ENCODE measurements at regions of chr12 and their contacts with region 1.

Region 1: DNA sequence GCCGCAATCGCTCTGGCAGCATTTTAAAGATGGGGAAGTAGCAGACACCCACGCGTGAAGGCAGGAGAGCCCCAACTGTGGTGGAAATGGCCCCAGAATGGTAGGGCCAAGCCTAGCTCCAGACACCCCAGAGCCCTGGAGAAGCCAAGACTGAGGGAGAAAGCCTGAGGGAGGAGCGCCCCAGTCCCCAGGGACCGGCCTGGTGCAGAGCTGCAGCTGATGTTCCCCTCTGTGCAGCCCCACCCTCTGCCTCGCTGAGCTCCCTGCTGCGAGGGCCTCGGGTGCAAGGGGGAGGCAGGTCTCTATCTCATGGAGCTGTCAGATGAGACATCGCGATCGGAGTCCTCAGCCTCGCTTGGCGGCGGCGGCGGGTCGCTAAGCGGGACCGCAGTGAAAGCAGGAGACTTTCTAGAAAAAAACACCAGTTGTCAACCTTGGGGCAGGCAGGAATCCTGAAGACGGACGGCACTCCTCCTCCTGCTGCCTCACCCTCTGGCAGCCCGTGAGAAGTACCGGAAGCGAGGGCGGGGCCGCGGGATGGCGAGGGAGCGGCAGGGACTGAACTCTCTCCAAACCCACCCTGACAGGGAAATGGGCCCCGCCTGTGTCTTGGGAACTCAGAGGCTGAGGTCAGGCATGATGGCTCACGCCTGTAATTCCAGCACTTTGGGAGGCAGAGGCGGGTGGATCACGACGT is 6.0 kb downstream of the GAPDH start:
- DNase-seq: peak; percentile 21 to 63 (median 33)
- H3K4me3 ChIP-seq: no peak overlapping the region
- H3K4me3 Mint-ChIP-seq: peak overlapping the region in 6 of 7 donors; percentile 16 to 73 (median 66)
- H3K27ac ChIP-seq: no peak overlapping the region
- H3K27ac Mint-ChIP-seq: peak overlapping the region in 7 of 8 donors; percentile 12 to 95 (median 77)
- H3K4me1 ChIP-seq: peaks cover 62% of the 10 kb centered on the region
- H3K4me1 Mint-ChIP-seq: peaks cover 40 to 48% (median 47%) of the 10 kb centered on the region in 3 donors
- H3K27me3 ChIP-seq: no peaks in the 10 kb centered on the region
- H3K27me3 Mint-ChIP-seq: peaks cover 0 to 1% of the 10 kb centered on the region in 2 donors

Region 2: DNA sequence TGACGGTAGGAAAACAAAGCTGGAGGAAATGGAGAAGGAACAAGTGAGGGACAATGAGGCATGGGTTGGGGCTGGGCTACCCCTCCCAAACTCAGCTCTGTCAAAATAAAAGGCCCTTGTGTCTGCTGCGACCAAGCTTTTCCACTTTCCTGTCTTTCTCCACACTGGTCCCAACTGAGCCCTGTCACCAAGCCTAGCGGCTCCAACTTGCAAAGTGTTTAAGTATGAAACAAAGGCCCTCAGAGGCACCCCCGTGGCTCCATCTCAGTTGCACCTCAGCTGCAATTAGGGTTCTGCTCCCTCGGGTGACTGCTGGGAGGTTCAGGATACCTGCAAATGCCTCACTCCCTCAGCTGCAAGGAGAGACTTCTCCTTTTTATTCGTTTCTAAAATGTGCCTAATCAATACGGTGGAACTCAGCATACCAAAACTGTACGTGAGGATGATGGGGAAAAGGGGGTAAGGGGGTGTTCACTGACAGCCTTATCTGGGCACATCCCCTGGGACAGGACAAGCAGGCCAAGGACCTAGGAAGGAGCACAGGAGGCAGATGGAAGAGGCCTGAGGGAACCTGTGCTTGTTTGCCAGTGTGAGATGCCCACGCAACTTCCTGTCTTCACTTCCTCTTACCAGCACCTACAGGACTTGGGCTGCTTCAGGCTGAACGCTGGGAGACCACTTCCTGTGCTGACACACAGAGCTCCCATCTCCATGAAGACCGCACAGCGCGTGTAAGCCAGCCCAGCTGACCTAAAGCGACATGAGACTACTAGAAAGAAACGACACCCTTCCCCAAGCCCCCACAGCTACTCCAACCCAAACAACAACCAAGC is 78.7 kb before region 1 on chr12:
- CTCF ChIA-PET with region 1: interaction called, 56 read pairs
- POLR2A ChIA-PET with region 1: interaction called, 23 read pairs
- DNase-seq: peak; percentile 74 to 93 (median 87)
- H3K4me3 ChIP-seq: peak overlapping the region; percentile 46
- H3K4me3 Mint-ChIP-seq: peak overlapping the region; percentile 71 to 89 (median 83)
- H3K27ac ChIP-seq: peak overlapping the region; percentile 79
- H3K27ac Mint-ChIP-seq: peak overlapping the region; percentile 94 to 99 (median 99)
- H3K4me1 ChIP-seq: peaks cover 88% of the 10 kb centered on the region
- H3K4me1 Mint-ChIP-seq: peaks cover 75 to 89% (median 83%) of the 10 kb centered on the region in 3 donors
- H3K27me3 ChIP-seq: no peaks in the 10 kb centered on the region
- H3K27me3 Mint-ChIP-seq: peaks cover 0 to 2% of the 10 kb centered on the region in 2 donors

Region 3: DNA sequence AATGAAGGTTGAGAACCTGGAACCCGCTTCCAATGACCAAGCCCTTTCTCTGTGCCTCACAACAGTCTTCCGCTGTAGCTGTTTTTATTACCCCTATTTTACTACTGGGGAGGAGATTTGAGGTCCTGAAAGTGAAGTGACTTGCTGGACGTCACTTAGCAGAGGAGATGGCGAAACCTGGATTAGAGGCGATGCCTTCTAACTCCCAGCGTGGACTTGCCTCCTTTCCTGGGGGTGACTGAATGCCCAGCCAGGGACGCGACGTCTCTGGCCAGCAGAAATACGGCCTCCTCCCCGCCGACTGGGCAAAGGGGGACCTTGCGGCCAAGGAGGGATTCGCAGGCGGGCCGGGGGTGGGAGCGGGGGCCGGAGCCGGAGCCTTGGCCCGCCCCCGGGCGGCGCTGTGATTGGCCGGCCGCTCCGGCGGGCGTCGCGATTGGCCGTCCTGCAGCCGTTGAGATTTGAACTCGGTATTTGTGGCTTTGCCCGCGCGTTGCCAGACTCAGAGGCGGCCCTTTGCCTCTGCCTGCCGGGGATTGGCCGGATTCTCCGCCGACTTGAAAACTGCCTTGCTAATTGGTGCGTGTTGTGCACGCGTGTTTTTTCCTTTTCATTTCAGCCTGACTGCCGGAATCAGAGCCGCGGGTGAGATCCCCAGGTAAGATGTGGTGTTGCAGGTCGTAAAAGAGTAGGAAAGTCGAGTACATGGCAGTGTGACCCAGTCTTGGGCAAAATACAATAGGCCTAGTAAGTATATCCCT is 46.7 kb before region 1 on chr12 and contains the start of gene NCAPD2:
- CTCF ChIA-PET with region 1: interaction called, 14 read pairs
- POLR2A ChIA-PET with region 1: interaction called, 16 read pairs
- DNase-seq: peak; percentile 91 to 97 (median 96)
- H3K4me3 ChIP-seq: peak within 1 kb of the TSS; percentile 93
- H3K4me3 Mint-ChIP-seq: peak within 1 kb of the TSS; percentile 87 to 99 (median 95)
- H3K27ac ChIP-seq: peak within 1 kb of the TSS; percentile 76
- H3K27ac Mint-ChIP-seq: peak within 1 kb of the TSS; percentile 88 to 99 (median 97)
- H3K4me1 ChIP-seq: peaks cover 28% of the 10 kb centered on the region
- H3K4me1 Mint-ChIP-seq: peaks cover 34 to 44% (median 43%) of the 10 kb centered on the region in 3 donors
- H3K27me3 ChIP-seq: no peaks in the 10 kb centered on the region
- H3K27me3 Mint-ChIP-seq: peaks cover 0 to 2% of the 10 kb centered on the region in 2 donors
- total RNA-seq, gene NCAPD2: 96.5 to 97.5 TPM

Region 4: GRCh38 chr12:6554168-6555017 is 14.1 kb after region 1 on chr12:
- CTCF ChIA-PET with region 1: interaction called, 46 read pairs
- POLR2A ChIA-PET with region 1: interaction called, 4 read pairs
- DNase-seq: peak; percentile 55 to 81 (median 61)
- H3K4me3 ChIP-seq: peak overlapping the region; percentile 70
- H3K4me3 Mint-ChIP-seq: peak overlapping the region; percentile 86 to 97 (median 94)
- H3K27ac ChIP-seq: no peak overlapping the region
- H3K27ac Mint-ChIP-seq: peak overlapping the region in 7 of 8 donors; percentile 56 to 96 (median 81)
- H3K4me1 ChIP-seq: peaks cover 36% of the 10 kb centered on the region
- H3K4me1 Mint-ChIP-seq: peaks cover 42 to 58% (median 51%) of the 10 kb centered on the region in 3 donors
- H3K27me3 ChIP-seq: no peaks in the 10 kb centered on the region
- H3K27me3 Mint-ChIP-seq: no peaks in the 10 kb centered on the region